GM23248 (cell line): ENCODE measurements at regions of chr14 and their contacts with region 1.

Region 1: DNA sequence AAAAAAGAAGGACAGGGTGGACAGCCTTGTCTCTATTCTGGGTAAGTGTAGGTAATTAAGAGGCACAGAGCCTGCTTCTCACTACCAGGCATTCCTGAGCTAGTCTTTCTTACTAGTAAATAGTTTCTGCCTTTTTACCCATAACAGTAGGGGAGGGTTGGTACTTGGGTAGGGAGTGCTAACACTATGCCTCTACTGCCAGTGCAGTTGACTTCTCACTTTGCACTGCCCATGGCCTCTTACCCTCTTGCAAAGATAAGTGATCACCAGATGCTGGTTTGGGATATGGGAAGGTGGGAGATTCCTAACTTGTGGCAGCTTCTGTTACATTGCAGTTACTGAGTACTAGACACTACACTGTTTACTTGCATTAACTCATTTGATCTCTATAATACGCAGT is 11.6 kb downstream of the AHSA1 start:
- DNase-seq: no peak
- H3K4me3 ChIP-seq: no peak overlapping the region
- H3K27ac ChIP-seq: no peak overlapping the region
- H3K4me1 ChIP-seq: no peaks in the 10 kb centered on the region
- H3K27me3 ChIP-seq: peaks cover 4% of the 10 kb centered on the region; the same call in 1 of the 2 replicates

Region 2: GRCh38 chr14:77284466-77284865 is 185.1 kb before region 1 on chr14:
- in situ Hi-C with region 1: no loop called
- DNase-seq: no peak
- H3K4me3 ChIP-seq: no peak overlapping the region
- H3K27ac ChIP-seq: no peak overlapping the region
- H3K4me1 ChIP-seq: no peaks in the 10 kb centered on the region
- H3K27me3 ChIP-seq: no peaks in the 10 kb centered on the region

Region 3: DNA sequence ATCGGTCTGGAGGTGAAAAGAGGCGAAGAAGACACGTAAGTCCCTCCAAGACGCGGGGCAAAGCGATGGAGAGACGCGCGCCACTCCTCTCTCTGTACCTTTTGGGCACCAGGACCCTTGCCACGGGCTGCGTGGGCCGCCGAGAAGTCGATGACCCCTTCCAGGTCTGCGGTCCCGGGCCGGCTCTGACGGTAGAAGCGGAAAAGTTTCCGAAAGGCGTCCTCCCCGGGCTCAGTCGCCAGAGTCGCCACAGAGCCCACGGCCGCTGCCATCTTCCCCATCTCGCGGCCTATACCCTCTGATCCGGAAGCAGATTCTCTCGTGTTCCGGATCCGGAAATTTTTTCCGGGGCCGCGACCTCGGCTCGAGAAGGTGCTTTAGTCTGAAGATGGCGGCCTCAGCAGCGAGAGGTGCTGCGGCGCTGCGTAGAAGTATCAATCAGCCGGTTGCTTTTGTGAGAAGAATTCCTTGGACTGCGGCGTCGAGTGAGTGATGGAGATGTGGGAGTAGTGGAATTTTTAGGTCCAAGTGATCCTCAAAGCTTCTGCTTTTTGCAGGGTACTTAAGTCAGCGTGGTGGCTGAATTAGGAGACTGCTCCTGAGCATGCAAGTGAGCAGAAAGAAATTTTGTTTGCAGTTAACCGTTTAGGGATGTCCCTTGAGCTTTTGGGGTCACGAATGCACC is 238.3 kb after region 1 on chr14 and contains the starts of genes ALKBH1 and SLIRP:
- in situ Hi-C with region 1: loop called (anchors 10 kb)
- DNase-seq: peak; percentile 94
- H3K4me3 ChIP-seq: peak within 1 kb of the TSS; percentile 92
- H3K27ac ChIP-seq: peak within 1 kb of the TSS; percentile 56
- H3K4me1 ChIP-seq: peaks cover 18% of the 10 kb centered on the region
- H3K27me3 ChIP-seq: no peaks in the 10 kb centered on the region
- total RNA-seq, gene ALKBH1: 13.2 and 13.4 TPM in 2 replicates
- total RNA-seq, gene SLIRP: 147 and 258 TPM in 2 replicates